ENCODE measurements at regions of chr20 and their contacts with region 1.

Region 1: GRCh38 chr20:37564388-37565133 is 36.9 kb upstream of the BLCAP start:
- DNase-seq: peak; percentile 90
- H3K4me3 ChIP-seq: peak overlapping the region in 1 of 2 experiments; percentile 29; a peak in 1 of 4 replicates
- H3K27ac ChIP-seq: no peak overlapping the region
- H3K4me1 ChIP-seq: peaks cover 0 to 3% of the 10 kb centered on the region in 2 experiments; a peak in 1 of 4 replicates
- H3K27me3 ChIP-seq: peaks cover 13% of the 10 kb centered on the region
- CTCF ChIP-seq: peak; percentile 91
- EP300 ChIP-seq: no peak
- RAD21 ChIP-seq: peak; percentile 95

Region 2: GRCh38 chr20:37598100-37598543 is 33.6 kb after region 1 on chr20:
- CTCF ChIA-PET with region 1: interaction called, 23 read pairs
- POLR2A ChIA-PET with region 1: no interaction called
- DNase-seq: peak; percentile 76
- H3K4me3 ChIP-seq: no peak overlapping the region; a peak in 1 of 4 replicates
- H3K27ac ChIP-seq: peak overlapping the region in 1 of 2 experiments; percentile 78; a peak in 2 of 4 replicates
- H3K4me1 ChIP-seq: peaks cover 0 to 24% of the 10 kb centered on the region in 2 experiments; a peak in 2 of 4 replicates
- H3K27me3 ChIP-seq: no peaks in the 10 kb centered on the region; the same call in 1 of the 2 replicates
- CTCF ChIP-seq: no peak
- EP300 ChIP-seq: no peak
- RAD21 ChIP-seq: no peak

Region 3: DNA sequence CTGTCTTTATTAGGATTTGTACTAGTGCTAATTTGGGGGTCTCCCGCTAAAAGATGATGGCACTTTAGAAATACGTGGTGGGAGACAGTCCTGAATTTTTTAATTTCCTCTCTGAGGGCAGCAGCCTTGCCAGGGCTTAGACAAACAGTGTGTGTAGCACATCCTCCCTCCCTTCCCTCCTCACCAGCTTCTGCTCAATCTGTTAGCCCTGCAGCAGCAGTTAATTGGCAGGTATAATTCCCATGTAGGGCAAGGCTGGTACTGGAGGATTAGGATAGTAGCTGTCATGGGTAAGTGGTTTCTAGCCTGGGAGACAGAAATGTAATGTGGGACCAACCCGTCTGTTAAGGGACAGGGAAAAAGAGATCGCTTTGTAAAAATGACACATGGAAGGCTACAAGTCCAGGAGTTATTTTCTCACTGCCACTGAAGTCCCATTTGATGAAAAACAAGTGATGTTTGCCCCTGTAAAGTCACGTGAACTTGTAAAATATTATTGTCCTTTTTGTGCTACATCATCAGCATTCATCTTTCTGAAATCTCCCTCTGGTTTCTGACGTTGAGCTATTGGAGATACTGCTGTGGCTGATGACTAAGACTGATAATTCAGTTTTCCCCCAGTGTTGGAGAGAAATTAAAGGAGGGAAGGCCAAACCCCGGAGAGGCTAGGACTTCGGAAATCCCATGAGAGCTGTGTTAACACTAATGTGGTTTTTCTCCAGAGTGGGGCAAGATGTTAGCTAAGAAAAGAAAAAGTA is 169.8 kb after region 1 on chr20:
- CTCF ChIA-PET with region 1: interaction called, 17 read pairs
- POLR2A ChIA-PET with region 1: no interaction called
- DNase-seq: peak; percentile 53
- H3K4me3 ChIP-seq: no peak overlapping the region
- H3K27ac ChIP-seq: peak overlapping the region; percentile 23 to 30; a peak in 3 of 4 replicates
- H3K4me1 ChIP-seq: peaks cover 6 to 13% of the 10 kb centered on the region in 2 experiments; a peak in 3 of 4 replicates
- H3K27me3 ChIP-seq: no peaks in the 10 kb centered on the region
- CTCF ChIP-seq: no peak
- EP300 ChIP-seq: no peak
- RAD21 ChIP-seq: no peak

Region 4: DNA sequence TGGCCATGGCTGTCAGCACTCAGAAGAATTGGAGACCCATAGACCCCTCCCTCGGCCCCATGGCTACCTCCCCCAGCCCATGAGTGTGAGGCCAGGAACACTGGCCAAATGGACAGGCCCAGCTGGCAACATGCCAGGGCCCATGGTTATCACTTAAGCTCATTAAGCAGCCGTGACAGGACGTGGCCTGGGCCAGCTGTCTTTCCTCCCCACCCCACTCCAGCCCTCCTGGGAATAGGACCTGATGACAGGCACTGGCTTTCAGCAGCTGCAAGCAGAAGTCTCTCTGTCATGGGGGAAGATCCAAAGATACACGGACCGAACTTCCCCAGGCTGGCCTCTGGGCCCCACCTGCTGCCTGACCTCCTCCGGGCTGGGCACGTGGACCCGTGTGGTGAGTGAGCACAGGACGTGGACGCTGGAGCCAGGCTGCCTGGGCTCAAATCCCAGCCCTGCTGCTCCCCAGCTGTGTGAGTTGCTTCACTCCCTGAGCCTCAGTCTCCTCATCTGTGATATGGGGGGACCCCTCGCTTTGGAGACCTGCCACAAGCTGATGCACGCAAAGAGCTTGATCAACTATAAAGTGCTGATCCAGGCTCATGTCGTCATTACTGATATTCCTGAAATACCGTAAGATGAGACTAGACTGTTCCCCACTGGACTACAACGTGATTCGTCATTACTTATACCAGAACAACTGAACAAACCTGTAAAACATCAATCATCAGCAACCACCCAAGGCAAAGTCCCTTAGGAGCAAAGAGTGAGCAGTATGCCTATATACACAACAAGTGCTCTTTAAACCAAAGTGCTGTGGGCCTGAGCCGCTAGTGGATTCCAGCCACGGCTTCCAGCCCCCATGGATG is 316.4 kb after region 1 on chr20:
- CTCF ChIA-PET with region 1: interaction called, 30 read pairs
- POLR2A ChIA-PET with region 1: no interaction called
- DNase-seq: peak; percentile 96
- H3K4me3 ChIP-seq: no peak overlapping the region
- H3K27ac ChIP-seq: peak overlapping the region in 1 of 2 experiments; percentile 77; a peak in 2 of 4 replicates
- H3K4me1 ChIP-seq: peaks cover 0 to 42% of the 10 kb centered on the region in 2 experiments; a peak in 2 of 4 replicates
- H3K27me3 ChIP-seq: no peaks in the 10 kb centered on the region
- CTCF ChIP-seq: no peak
- EP300 ChIP-seq: peak in 1 of 2 experiments; percentile 95; a peak in 2 of 4 replicates
- RAD21 ChIP-seq: peak; percentile 37

Region 5: DNA sequence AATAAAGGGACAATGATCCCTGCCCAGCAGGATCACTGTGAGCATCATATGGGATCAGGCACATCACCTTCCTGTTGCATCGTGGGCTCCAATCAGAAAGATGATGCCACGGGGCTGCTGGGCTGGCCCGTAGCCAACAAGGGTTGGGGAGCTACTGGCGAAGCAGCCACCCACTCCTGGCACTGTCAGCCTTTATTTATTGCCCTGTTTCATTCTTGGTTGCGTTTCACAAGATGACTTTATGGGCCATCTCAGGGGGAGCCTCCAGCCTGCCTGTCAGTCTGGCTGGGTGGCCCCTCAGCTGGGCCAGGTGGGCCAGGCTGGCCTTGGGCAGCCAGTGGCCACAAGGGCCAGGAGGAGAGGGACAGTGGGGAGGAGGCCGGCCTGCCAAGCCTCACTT is 355.7 kb after region 1 on chr20:
- CTCF ChIA-PET with region 1: interaction called, 12 read pairs
- POLR2A ChIA-PET with region 1: no interaction called
- DNase-seq: no peak
- H3K4me3 ChIP-seq: no peak overlapping the region
- H3K27ac ChIP-seq: no peak overlapping the region
- H3K4me1 ChIP-seq: peaks cover 14 to 40% of the 10 kb centered on the region in 2 experiments; a peak in 3 of 4 replicates
- H3K27me3 ChIP-seq: no peaks in the 10 kb centered on the region
- CTCF ChIP-seq: no peak
- EP300 ChIP-seq: no peak
- RAD21 ChIP-seq: no peak

Region 6: DNA sequence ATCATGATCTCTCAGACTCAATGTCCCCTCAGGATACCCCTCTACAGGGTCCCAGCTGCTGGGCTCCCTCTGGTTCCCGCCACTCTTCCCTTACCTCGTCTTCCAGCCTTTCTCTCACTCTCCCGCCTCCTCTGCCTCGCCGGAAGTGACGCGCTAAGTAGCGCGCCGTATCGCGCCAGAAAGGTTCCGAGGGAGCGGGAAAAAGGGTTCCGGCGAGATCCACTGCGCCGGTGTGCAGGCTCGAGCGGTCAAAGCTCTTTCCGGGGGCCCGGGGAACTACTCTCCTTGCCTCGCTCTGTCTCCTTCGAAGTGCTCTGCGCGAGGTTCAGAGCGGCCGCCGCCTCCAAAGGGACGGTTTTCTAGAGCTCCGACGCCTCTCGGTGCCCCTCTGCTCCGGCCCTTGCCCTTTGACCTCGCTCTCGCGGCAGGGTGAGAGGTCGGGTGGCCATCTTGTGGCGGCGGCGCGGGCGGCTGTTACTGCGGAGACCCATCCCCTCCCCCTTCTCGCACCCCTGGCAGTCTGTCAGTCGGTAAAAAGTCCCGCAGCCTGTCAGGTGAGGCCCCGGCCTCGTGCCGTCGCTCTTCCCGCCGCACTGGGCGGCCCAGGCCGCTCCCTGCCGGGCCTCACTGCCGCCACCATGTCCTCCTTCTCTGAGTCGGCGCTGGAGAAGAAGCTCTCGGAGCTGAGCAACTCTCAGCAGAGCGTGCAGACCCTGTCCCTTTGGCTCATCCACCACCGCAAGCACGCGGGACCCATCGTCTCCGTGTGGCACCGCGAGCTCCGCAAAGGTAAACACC is 468.9 kb after region 1 on chr20 and contains the starts of genes RPRD1B and TTI1:
- CTCF ChIA-PET with region 1: interaction called, 14 read pairs
- POLR2A ChIA-PET with region 1: interaction called, 3 read pairs
- DNase-seq: peak; percentile 90
- H3K4me3 ChIP-seq: peak within 1 kb of the TSS; percentile 83 to 99
- H3K27ac ChIP-seq: peak within 1 kb of the TSS; percentile 82 to 91
- H3K4me1 ChIP-seq: peaks cover 8 to 25% of the 10 kb centered on the region in 2 experiments; a peak in 3 of 4 replicates
- H3K27me3 ChIP-seq: no peaks in the 10 kb centered on the region
- CTCF ChIP-seq: no peak
- EP300 ChIP-seq: no peak
- RAD21 ChIP-seq: no peak
- polyA plus RNA-seq, gene RPRD1B: 11.8 and 13.3 TPM in 2 replicates
- polyA plus RNA-seq, gene TTI1: 14.7 and 15.6 TPM in 2 replicates